ENCODE measurements at regions of chr6 and their contacts with region 1.

Region 1: GRCh38 chr6:125790358-125791150 is at the start of gene NCOA7:
- DNase-seq: peak; percentile 83 to 93
- H3K4me3 ChIP-seq: peak within 1 kb of the TSS; percentile 91 to 98
- H3K27ac ChIP-seq: peak within 1 kb of the TSS; percentile 95 to 96
- H3K4me1 ChIP-seq: peaks cover 0 to 53% (median 24%) of the 10 kb centered on the region in 4 donors
- H3K27me3 ChIP-seq: no peaks in the 10 kb centered on the region
- CTCF ChIP-seq: no peak

Region 2: DNA sequence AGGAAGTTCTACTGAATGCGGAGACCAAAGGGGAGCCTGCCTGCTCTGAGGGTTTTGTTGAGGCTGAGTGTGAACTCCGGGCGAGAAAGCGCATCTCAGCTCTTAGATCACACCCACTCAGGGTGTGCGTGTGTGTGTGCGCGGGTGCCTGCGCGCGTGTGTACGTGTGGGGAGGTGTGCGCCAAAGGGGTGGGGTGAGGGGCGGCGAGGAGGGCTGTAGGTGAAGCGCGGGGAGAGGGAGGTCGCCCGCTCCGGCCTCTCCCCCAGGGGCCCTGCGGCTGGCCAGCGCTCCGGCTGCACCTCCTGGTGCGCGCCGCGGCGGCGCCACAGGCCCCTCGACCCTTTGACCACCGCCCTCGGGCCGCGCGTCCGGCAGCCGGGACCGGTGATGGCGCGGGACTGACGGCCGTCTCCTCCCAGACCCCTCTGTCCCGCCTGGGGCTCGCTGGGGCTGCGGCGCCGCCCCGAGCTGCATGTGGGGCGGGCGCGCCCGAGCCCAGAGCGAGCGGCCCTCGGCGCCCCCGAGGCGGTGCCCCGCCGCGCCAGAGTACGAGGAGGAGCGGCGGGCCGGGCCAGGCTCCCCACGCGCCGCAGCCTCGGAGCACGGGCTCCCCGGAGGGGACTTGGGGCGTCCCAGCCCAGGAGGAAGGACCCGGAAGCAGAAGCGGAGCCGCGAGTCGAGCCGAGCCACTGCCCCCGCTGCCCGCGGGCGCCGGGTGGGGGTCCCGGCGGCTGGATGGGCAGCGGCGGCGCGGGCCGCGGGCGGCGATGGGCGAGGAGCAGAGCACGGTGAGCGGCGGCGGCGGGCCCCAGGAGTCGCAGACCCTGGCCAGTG is 828.6 kb before region 1 on chr6 and contains the start of gene RNF217:
- intact Hi-C with region 1: loop called (anchors 5 kb)
- DNase-seq: peak; percentile 69 to 89
- H3K4me3 ChIP-seq: peak within 1 kb of the TSS; percentile 78 to 94
- H3K27ac ChIP-seq: peak within 1 kb of the TSS; percentile 98 to 99
- H3K4me1 ChIP-seq: peaks cover 0 to 45% (median 15%) of the 10 kb centered on the region in 4 donors
- H3K27me3 ChIP-seq: no peaks in the 10 kb centered on the region
- CTCF ChIP-seq: no peak

Region 3: GRCh38 chr6:125956506-125957390 is 166.2 kb after region 1 on chr6 and contains the start of gene HINT3:
- intact Hi-C with region 1: loop called (anchors 5 kb)
- DNase-seq: peak; percentile 97
- H3K4me3 ChIP-seq: peak within 1 kb of the TSS; percentile 83 to 94
- H3K27ac ChIP-seq: peak within 1 kb of the TSS; percentile 91 to 96
- H3K4me1 ChIP-seq: peaks cover 0 to 27% (median 17%) of the 10 kb centered on the region in 4 donors
- H3K27me3 ChIP-seq: no peaks in the 10 kb centered on the region
- CTCF ChIP-seq: peak; percentile 98 to 99

Measured in tibial artery (tissue), 4 donors.